CD14-positive monocyte (primary cell): ENCODE measurements at regions of chr9 and their contacts with region 1.

Region 1: GRCh38 chr9:6757456-6758247 is at the start of gene KDM4C:
- DNase-seq: peak; percentile 91 to 95 (median 95)
- H3K4me3 ChIP-seq: peak within 1 kb of the TSS; percentile 71 to 92 (median 85)
- H3K4me3 Mint-ChIP-seq: peak within 1 kb of the TSS; percentile 95 to 99
- H3K27ac ChIP-seq: peak within 1 kb of the TSS; percentile 98 to 100
- H3K27ac Mint-ChIP-seq: peak within 1 kb of the TSS; percentile 99 to 100 (median 100)
- H3K4me1 ChIP-seq: peaks cover 22 to 24% of the 10 kb centered on the region in 2 donors
- H3K4me1 Mint-ChIP-seq: peaks cover 29% of the 10 kb centered on the region
- H3K27me3 ChIP-seq: no peaks in the 10 kb centered on the region
- H3K27me3 Mint-ChIP-seq: peaks cover 0 to 2% (median 0%) of the 10 kb centered on the region in 3 donors
- CTCF ChIP-seq: no peak
- polyA plus RNA-seq, gene KDM4C: 15.2 to 36.2 (median 17.1) TPM

Region 2: GRCh38 chr9:6412487-6413364 is 344.9 kb before region 1 on chr9 and contains the start of gene UHRF2:
- intact Hi-C with region 1: loop called in 1 of 2 experiments (anchors 10 kb)
- DNase-seq: peak; percentile 96 to 99 (median 97)
- H3K4me3 ChIP-seq: peak within 1 kb of the TSS; percentile 55 to 88 (median 81)
- H3K4me3 Mint-ChIP-seq: peak within 1 kb of the TSS; percentile 87 to 94
- H3K27ac ChIP-seq: peak within 1 kb of the TSS; percentile 36 to 84
- H3K27ac Mint-ChIP-seq: peak within 1 kb of the TSS; percentile 78 to 87 (median 85)
- H3K4me1 ChIP-seq: peaks cover 33 to 58% of the 10 kb centered on the region in 2 donors
- H3K4me1 Mint-ChIP-seq: peaks cover 34% of the 10 kb centered on the region
- H3K27me3 ChIP-seq: no peaks in the 10 kb centered on the region
- H3K27me3 Mint-ChIP-seq: peaks cover 0 to 1% (median 0%) of the 10 kb centered on the region in 3 donors
- CTCF ChIP-seq: no peak
- polyA plus RNA-seq, gene UHRF2: 1.6 to 36.4 (median 7.7) TPM

Region 3: GRCh38 chr9:6584881-6585597 is 172.6 kb before region 1 on chr9:
- intact Hi-C with region 1: loop called in 1 of 2 experiments (anchors 10 kb)
- DNase-seq: no peak
- H3K4me3 ChIP-seq: no peak overlapping the region
- H3K4me3 Mint-ChIP-seq: no peak overlapping the region
- H3K27ac ChIP-seq: no peak overlapping the region
- H3K27ac Mint-ChIP-seq: no peak overlapping the region
- H3K4me1 ChIP-seq: peaks cover 9 to 28% of the 10 kb centered on the region in 2 donors
- H3K4me1 Mint-ChIP-seq: peaks cover 21% of the 10 kb centered on the region
- H3K27me3 ChIP-seq: no peaks in the 10 kb centered on the region
- H3K27me3 Mint-ChIP-seq: peaks cover 0 to 2% (median 0%) of the 10 kb centered on the region in 3 donors
- CTCF ChIP-seq: peak; percentile 75

Region 4: GRCh38 chr9:6681147-6681956 is 76.3 kb before region 1 on chr9:
- intact Hi-C with region 1: loop called (anchors 2 to 5 kb)
- DNase-seq: peak; percentile 97 to 98 (median 98)
- H3K4me3 ChIP-seq: peak overlapping the region; percentile 48 to 72 (median 68)
- H3K4me3 Mint-ChIP-seq: peak overlapping the region; percentile 83 to 95
- H3K27ac ChIP-seq: peak overlapping the region; percentile 96 to 98
- H3K27ac Mint-ChIP-seq: peak overlapping the region; percentile 98 to 99 (median 99)
- H3K4me1 ChIP-seq: peaks cover 43 to 47% of the 10 kb centered on the region in 2 donors
- H3K4me1 Mint-ChIP-seq: peaks cover 28% of the 10 kb centered on the region
- H3K27me3 ChIP-seq: no peaks in the 10 kb centered on the region
- H3K27me3 Mint-ChIP-seq: peaks cover 0 to 4% (median 0%) of the 10 kb centered on the region in 3 donors
- CTCF ChIP-seq: no peak

Region 5: GRCh38 chr9:6715755-6716643 is 41.7 kb before region 1 on chr9:
- intact Hi-C with region 1: loop called in 1 of 2 experiments (anchors 5 kb)
- DNase-seq: peak; percentile 28 to 54 (median 48)
- H3K4me3 ChIP-seq: peak overlapping the region; percentile 30 to 77 (median 55)
- H3K4me3 Mint-ChIP-seq: peak overlapping the region; percentile 83 to 91
- H3K27ac ChIP-seq: peak overlapping the region in 1 of 2 donors; percentile 71
- H3K27ac Mint-ChIP-seq: peak overlapping the region in 6 of 7 donors; percentile 35 to 90 (median 68)
- H3K4me1 ChIP-seq: peaks cover 14 to 31% of the 10 kb centered on the region in 2 donors
- H3K4me1 Mint-ChIP-seq: peaks cover 25% of the 10 kb centered on the region
- H3K27me3 ChIP-seq: no peaks in the 10 kb centered on the region
- H3K27me3 Mint-ChIP-seq: peaks cover 0 to 15% (median 9%) of the 10 kb centered on the region in 3 donors
- CTCF ChIP-seq: no peak